ENCODE measurements at regions of chr6 and their contacts with region 1.

Region 1: DNA sequence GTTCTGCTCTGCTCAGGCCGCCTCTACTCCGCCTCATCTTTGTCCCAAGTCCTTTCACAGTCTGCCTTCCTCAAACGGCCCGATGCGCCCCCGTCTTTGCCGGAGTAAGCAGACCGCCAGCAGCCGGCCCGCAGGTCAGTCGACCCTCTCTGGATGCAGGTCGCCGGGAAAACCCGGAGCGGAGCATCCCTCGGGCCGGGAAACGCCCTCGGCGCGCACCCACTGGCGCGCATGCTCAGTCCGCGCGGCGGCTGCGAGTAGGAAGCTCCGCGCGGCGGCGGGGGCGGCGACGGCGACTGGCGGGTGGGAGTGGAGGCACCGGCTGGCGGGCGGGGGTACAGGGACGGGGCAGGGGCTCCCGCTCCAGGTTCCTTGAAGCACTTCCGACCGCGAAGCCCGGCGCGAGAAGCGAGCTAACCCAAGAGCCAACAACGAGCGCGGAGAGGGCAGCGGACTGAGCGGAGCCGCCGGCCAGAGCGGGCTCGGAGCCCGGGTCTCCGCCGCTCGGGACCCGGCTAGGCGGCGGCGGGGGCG is at the start of gene LRRC1:
- DNase-seq: peak; percentile 59 to 90 (median 82)
- ATAC-seq: peak; percentile 64
- H3K4me3 ChIP-seq: peak within 1 kb of the TSS; percentile 88
- H3K4me3 Mint-ChIP-seq: peak within 1 kb of the TSS; percentile 96
- H3K27ac ChIP-seq: peak within 1 kb of the TSS; percentile 41 to 46
- H3K27ac Mint-ChIP-seq: peak within 1 kb of the TSS; percentile 87
- H3K4me1 ChIP-seq: peaks cover 13% of the 10 kb centered on the region
- H3K4me1 Mint-ChIP-seq: peaks cover 27% of the 10 kb centered on the region
- H3K27me3 ChIP-seq: no peaks in the 10 kb centered on the region
- H3K27me3 Mint-ChIP-seq: peaks cover 19% of the 10 kb centered on the region
- CTCF ChIP-seq: no peak
- total RNA-seq, gene LRRC1: 0.47 to 0.87 TPM

Region 2: DNA sequence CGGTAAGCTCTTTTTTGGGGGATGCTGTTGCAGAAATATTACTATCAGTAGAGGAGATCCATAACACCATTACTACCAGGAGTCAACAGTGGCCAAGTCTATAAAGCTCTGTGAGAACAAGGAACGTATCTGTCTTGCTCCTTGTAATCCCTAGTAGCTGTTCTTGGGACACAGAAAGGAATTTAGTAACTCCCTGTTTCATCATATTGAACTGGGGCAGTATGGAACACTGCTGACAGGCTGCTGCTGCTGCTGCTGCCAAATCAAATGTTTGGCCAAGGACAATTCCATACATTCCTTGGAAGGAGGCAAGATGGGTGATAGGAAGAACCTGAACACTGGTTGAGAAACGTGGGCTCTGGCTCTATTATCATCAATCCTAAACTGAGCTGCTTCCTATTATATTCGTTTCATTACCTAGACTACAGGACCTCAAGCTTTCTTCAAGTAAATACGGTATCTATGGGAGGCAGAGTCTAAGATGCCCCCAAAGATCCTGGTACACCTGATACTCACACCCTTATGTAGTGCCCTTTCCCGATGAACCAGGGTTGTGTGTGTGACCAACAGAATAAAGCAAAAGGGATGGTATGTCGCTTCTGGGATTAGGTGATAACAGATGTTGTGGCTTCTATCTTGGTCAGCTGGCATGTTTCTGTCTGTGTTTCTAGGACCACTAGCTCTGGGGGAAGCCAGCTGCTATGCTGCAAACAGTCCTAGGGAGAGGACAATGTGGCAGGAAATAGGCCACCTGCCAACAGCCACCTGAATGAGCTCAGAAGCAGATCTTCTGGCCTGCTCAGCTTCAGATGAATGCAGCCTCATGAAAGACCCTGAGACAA is 485.5 kb before region 1 on chr6:
- CTCF ChIA-PET with region 1: no interaction called
- POLR2A ChIA-PET with region 1: no interaction called
- intact Hi-C with region 1: loop called in 1 of 2 experiments (anchors 10 kb)
- DNase-seq: peak in 6 of 9 experiments; percentile 26 to 62 (median 34)
- ATAC-seq: peak; percentile 53
- H3K4me3 ChIP-seq: no peak overlapping the region
- H3K4me3 Mint-ChIP-seq: no peak overlapping the region
- H3K27ac ChIP-seq: peak overlapping the region in 1 of 2 experiments; percentile 38
- H3K27ac Mint-ChIP-seq: peak overlapping the region; percentile 45
- H3K4me1 ChIP-seq: peaks cover 53% of the 10 kb centered on the region
- H3K4me1 Mint-ChIP-seq: peaks cover 81% of the 10 kb centered on the region
- H3K27me3 ChIP-seq: no peaks in the 10 kb centered on the region
- H3K27me3 Mint-ChIP-seq: no peaks in the 10 kb centered on the region
- CTCF ChIP-seq: no peak

Region 3: DNA sequence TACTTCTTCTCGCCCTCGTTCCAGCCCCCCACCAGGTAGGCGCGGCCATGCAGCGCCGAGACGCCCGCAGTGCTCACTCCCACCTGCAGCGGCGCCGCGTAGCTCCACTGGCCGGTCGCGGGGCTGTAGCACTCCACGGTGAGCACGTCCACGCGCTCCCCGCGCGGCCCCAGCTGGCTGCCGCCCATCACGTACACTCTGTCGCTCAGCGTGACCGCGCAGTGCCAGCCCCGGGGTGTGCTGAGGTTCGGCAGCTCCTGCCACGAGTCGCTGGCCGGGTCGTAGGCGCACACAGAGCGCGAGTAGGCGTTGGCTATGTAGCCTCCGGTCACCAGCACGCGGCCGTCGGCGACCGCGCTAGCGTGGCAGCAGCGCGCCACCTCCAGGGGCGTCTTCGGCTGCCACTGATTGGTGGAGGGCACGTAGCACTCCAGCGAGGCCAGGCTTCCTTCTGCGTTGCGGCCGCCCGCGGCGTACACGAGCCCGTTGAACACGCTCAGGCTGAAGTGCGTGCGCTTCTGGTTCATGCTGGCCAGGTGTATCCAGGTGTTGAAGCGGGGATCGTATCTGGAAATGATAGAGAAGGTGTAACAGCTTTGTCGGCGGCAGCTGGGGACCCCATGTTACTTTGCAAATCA is 142.9 kb before region 1 on chr6:
- CTCF ChIA-PET with region 1: no interaction called
- POLR2A ChIA-PET with region 1: interaction called, 4 read pairs
- intact Hi-C with region 1: loop called in 1 of 2 experiments (anchors 1 kb)
- DNase-seq: peak; percentile 57 to 91 (median 79)
- ATAC-seq: peak; percentile 86
- H3K4me3 ChIP-seq: peak overlapping the region; percentile 67 to 81
- H3K4me3 Mint-ChIP-seq: peak overlapping the region; percentile 91
- H3K27ac ChIP-seq: peak overlapping the region; percentile 54 to 65
- H3K27ac Mint-ChIP-seq: peak overlapping the region; percentile 89
- H3K4me1 ChIP-seq: peaks cover 32% of the 10 kb centered on the region
- H3K4me1 Mint-ChIP-seq: peaks cover 32% of the 10 kb centered on the region
- H3K27me3 ChIP-seq: no peaks in the 10 kb centered on the region
- H3K27me3 Mint-ChIP-seq: no peaks in the 10 kb centered on the region
- CTCF ChIP-seq: no peak